Activated CD4-positive, alpha-beta T cell treated with anti-CD3 and anti-CD28 coated beads, Interleukin-2, amount 10 ng/mL, durations not matched to agents 7 days and 5 days (primary cell): ENCODE measurements at regions of chr5 and their contacts with region 1.

Region 1: DNA sequence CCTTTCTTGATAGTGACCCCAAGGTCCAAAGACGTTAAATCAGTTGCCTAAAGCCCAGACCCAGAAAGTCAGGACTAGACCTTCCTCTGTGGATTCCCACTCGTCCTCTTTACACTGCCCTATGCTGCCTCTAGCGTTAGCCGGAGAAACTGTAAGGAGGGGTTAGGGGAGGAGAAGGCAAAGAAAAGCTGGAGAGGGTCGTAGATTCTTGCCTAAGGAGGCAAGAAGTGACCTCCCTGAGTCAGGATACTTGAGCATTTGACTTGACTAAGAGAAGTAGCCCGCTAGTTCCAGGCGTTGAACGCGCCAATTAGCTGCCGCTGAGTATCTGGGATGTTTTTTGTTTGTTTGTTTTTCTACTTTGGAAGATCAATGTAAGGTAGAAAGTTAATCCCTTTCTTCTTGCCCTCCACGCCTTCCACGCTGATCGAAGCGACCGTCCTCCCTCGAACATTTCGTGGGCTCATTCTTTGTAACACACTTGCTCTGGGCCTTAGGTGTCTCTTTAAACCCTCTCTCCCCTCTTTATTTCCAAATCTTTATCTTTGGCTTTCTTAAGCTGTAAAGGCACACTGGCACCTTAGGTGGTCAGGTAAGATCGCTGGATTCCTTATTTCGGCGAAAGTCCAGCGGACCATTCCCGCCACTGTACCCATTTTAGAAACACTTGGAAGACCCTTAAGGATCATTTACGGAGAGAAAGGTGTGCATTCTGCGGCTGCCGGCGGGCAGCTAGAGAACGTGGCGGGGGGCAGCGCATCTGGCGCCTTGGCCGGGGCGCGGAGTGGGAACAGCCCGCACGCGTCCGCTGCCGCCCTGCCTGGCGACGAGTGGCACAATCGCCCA is 5.1 kb upstream of the RGMB start:
- DNase-seq: peak; percentile 31
- H3K4me3 Mint-ChIP-seq: peak overlapping the region; percentile 62
- H3K27ac Mint-ChIP-seq: no peak overlapping the region
- H3K4me1 Mint-ChIP-seq: peaks cover 45% of the 10 kb centered on the region
- H3K27me3 Mint-ChIP-seq: peaks cover 77% of the 10 kb centered on the region

Region 2: GRCh38 chr5:98735806-98736507 is 32.4 kb before region 1 on chr5:
- CTCF ChIA-PET with region 1: no interaction called
- POLR2A ChIA-PET with region 1: no interaction called
- DNase-seq: no peak
- H3K4me3 Mint-ChIP-seq: no peak overlapping the region
- H3K27ac Mint-ChIP-seq: no peak overlapping the region
- H3K4me1 Mint-ChIP-seq: no peaks in the 10 kb centered on the region
- H3K27me3 Mint-ChIP-seq: peaks cover 2% of the 10 kb centered on the region

Region 3: GRCh38 chr5:98750693-98751092 is 17.7 kb before region 1 on chr5:
- CTCF ChIA-PET with region 1: no interaction called
- POLR2A ChIA-PET with region 1: no interaction called
- DNase-seq: no peak
- H3K4me3 Mint-ChIP-seq: no peak overlapping the region
- H3K27ac Mint-ChIP-seq: no peak overlapping the region
- H3K4me1 Mint-ChIP-seq: no peaks in the 10 kb centered on the region
- H3K27me3 Mint-ChIP-seq: peaks cover 10% of the 10 kb centered on the region

Region 4: GRCh38 chr5:98779264-98779877 is 11.0 kb after region 1 on chr5:
- CTCF ChIA-PET with region 1: interaction called, 11 read pairs
- POLR2A ChIA-PET with region 1: no interaction called
- DNase-seq: no peak
- H3K4me3 Mint-ChIP-seq: no peak overlapping the region
- H3K27ac Mint-ChIP-seq: no peak overlapping the region
- H3K4me1 Mint-ChIP-seq: peaks cover 11% of the 10 kb centered on the region
- H3K27me3 Mint-ChIP-seq: peaks cover 27% of the 10 kb centered on the region

Region 5: GRCh38 chr5:98796197-98796972 is 28.0 kb after region 1 on chr5:
- CTCF ChIA-PET with region 1: interaction called, 10 read pairs
- POLR2A ChIA-PET with region 1: no interaction called
- DNase-seq: peak; percentile 54
- H3K4me3 Mint-ChIP-seq: no peak overlapping the region
- H3K27ac Mint-ChIP-seq: no peak overlapping the region
- H3K4me1 Mint-ChIP-seq: no peaks in the 10 kb centered on the region
- H3K27me3 Mint-ChIP-seq: no peaks in the 10 kb centered on the region